ENCODE measurements at regions of chr17 and their contacts with region 1.

Region 1: GRCh38 chr17:67157732-67158639 is 87.0 kb downstream of the HELZ start:
- DNase-seq: no peak
- H3K4me3 ChIP-seq: no peak overlapping the region
- H3K27ac ChIP-seq: no peak overlapping the region
- H3K4me1 ChIP-seq: peaks cover 8% of the 10 kb centered on the region
- H3K27me3 ChIP-seq: no peaks in the 10 kb centered on the region
- CTCF ChIP-seq: peak; percentile 50

Region 2: DNA sequence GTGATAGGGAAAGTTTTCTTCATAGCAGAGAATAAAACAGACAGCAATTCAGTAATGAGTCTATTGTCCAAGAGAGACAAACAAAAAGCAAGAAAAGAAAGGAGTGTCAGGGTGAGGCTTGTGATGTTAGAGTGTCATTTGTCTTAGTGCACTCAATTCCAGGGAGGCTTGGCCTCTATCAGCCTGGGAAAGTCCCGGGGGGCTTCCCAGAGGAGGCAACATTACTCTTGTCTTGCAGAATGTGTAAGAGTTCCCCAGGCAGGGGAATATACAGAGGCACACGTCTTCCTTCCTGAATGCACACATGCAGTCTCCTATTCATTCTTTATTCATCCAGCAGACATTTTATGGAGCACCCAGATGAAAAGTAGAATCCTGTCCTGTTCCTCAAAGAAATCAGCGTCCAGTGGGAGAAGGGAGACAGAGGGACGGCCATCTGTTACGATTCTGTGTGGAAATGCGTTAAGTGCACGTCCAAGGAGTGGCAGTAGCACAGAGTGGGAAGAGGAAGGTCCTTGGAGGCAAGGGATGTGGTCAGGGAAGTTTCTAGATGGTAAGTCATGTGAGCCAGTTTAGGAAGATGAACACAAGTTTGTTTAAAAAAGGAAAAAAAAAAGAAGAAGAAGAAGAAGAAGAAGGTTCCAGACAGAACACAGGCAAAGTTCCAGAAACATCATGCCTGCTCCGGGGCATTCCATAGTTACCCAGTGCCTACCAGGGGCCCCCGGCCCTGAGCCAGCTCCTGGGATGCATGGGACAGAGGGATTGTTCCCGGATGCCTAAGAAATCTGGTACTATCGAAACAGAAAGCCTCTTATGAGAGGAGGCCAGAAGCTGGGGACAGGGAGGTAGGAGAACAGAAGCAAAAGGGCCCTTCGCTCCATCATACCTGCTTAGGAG is 172.4 kb before region 1 on chr17:
- intact Hi-C with region 1: no loop called
- DNase-seq: no peak
- H3K4me3 ChIP-seq: no peak overlapping the region
- H3K27ac ChIP-seq: no peak overlapping the region
- H3K4me1 ChIP-seq: no peaks in the 10 kb centered on the region
- H3K27me3 ChIP-seq: peaks cover 82% of the 10 kb centered on the region
- CTCF ChIP-seq: no peak

Region 3: GRCh38 chr17:67121316-67121887 is 36.6 kb before region 1 on chr17:
- intact Hi-C with region 1: loop called (anchors 5 kb)
- DNase-seq: no peak
- H3K4me3 ChIP-seq: no peak overlapping the region
- H3K27ac ChIP-seq: no peak overlapping the region
- H3K4me1 ChIP-seq: peaks cover 18% of the 10 kb centered on the region
- H3K27me3 ChIP-seq: no peaks in the 10 kb centered on the region
- CTCF ChIP-seq: no peak

Measured in left ventricle myocardium inferior (tissue), 1 donor.